ENCODE measurements at regions of chr22 and their contacts with region 1.

Region 1: GRCh38 chr22:29689880-29690213 is 30.0 kb upstream of the CABP7 start:
- DNase-seq: peak; percentile 64 to 87 (median 79)
- H3K4me3 ChIP-seq: no peak overlapping the region
- H3K27ac ChIP-seq: peak overlapping the region in 31 of 59 donors; percentile 4 to 65 (median 36)
- H3K27me3 ChIP-seq: no peaks in the 10 kb centered on the region
- CTCF ChIP-seq: peak; percentile 61 to 92 (median 86)

Region 2: GRCh38 chr22:29716814-29717545 is 27.1 kb after region 1 on chr22:
- intact Hi-C with region 1: no loop called
- DNase-seq: peak in 9 of 10 donors; percentile 62 to 82 (median 73)
- H3K4me3 ChIP-seq: no peak overlapping the region
- H3K27ac ChIP-seq: peak overlapping the region in 1 of 59 donors; percentile 57
- H3K27me3 ChIP-seq: peaks cover 0 to 42% (median 16%) of the 10 kb centered on the region in 45 donors
- CTCF ChIP-seq: peak in 10 of 56 donors; percentile 0 to 49 (median 24)

Region 3: GRCh38 chr22:30089655-30089974 is 399.8 kb after region 1 on chr22:
- intact Hi-C with region 1: loop called in 1 of 2 experiments (anchors 2 kb)
- DNase-seq: no peak
- H3K4me3 ChIP-seq: no peak overlapping the region
- H3K27ac ChIP-seq: no peak overlapping the region
- H3K27me3 ChIP-seq: peaks cover 0 to 5% (median 0%) of the 10 kb centered on the region in 45 donors
- CTCF ChIP-seq: no peak